ENCODE measurements at regions of chr15 and their contacts with region 1.

Region 1: DNA sequence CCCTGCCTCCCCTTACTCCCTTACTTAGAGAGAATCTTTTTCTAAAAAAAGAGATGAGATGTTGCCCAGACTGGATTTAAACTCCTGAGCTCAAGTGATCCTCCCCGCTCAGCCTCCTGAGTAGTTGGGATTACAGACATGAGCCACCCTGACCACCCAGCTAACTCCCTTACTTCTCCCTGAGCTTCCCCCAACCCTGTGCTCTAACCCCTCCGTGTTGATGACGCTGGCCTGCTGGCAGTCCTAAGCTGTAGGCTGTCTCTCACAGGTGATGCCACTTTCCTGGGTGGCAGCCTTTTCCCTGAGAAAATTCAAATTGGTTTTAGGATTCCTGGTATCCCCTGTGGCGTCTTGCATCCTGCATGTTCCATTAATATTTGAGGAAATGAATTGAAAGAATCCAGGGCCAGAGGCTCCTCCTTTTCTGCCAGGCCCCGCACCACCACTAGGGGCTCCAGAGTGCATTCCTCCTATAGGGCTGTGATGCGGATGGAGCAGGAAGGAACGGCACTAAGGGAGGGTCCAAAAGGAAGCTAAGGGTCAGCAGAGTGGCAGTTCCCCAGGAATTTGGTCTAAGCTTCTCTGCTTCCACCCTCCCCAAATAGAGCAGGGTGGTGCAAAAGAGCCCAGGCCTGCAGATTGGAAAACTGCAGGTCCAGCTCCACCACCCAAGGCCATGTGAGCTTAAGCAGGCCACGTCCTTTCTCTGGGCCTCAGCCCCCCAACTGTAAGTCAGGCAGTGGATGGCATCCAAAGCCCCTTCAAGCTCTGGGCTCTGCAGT is 101.1 kb downstream of the DAPK2 start:
- DNase-seq: peak; percentile 82
- ATAC-seq: peak; percentile 97
- H3K4me3 Mint-ChIP-seq: no peak overlapping the region
- H3K27ac Mint-ChIP-seq: no peak overlapping the region
- H3K4me1 Mint-ChIP-seq: peaks cover 2% of the 10 kb centered on the region
- H3K27me3 Mint-ChIP-seq: no peaks in the 10 kb centered on the region
- CTCF ChIP-seq: peak; percentile 87

Region 2: DNA sequence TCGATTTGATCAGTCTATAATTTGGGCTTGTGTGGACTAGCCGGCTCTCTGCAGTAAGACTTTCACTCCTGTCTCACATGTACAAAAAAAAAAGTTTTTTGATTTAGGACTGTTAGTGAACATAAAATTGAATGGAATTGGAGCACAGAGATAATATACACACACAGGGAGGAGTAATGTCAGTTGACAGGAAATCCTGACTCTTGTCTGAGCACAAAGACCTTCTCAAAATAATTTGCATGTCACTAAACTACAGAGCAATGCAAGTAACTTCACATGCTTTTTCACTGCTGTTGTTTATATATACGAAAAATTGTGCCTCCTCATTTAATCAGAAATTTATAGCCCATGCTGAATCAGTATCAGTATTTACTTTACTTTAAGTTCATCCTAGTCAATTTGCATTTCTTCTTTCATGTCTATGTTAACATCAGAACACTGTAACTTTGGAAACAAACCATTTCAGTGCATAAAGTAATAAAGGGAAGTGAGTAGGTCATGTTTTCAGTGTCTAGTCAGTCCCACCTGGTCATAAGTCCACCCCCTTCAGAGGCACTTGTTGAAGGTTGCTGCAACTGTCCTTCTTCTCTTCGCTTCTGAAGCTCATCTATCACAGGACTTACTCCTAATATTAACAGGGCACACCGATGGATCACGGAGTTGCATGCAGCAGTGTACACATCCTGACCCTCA is 232.2 kb before region 1 on chr15:
- CTCF ChIA-PET with region 1: no interaction called
- POLR2A ChIA-PET with region 1: no interaction called
- DNase-seq: no peak
- ATAC-seq: no peak
- H3K4me3 Mint-ChIP-seq: no peak overlapping the region
- H3K27ac Mint-ChIP-seq: peak overlapping the region; percentile 44
- H3K4me1 Mint-ChIP-seq: peaks cover 7% of the 10 kb centered on the region
- H3K27me3 Mint-ChIP-seq: no peaks in the 10 kb centered on the region
- CTCF ChIP-seq: no peak

Region 3: GRCh38 chr15:63818191-63818590 is 127.0 kb before region 1 on chr15:
- CTCF ChIA-PET with region 1: interaction called, 12 read pairs
- POLR2A ChIA-PET with region 1: no interaction called
- DNase-seq: no peak
- ATAC-seq: peak; percentile 31; the same call in 1 of the 2 replicates
- H3K4me3 Mint-ChIP-seq: no peak overlapping the region
- H3K27ac Mint-ChIP-seq: peak overlapping the region; percentile 89
- H3K4me1 Mint-ChIP-seq: peaks cover 43% of the 10 kb centered on the region
- H3K27me3 Mint-ChIP-seq: no peaks in the 10 kb centered on the region
- CTCF ChIP-seq: no peak

Region 4: GRCh38 chr15:63922261-63922904 is 22.8 kb before region 1 on chr15:
- CTCF ChIA-PET with region 1: interaction called, 19 read pairs
- POLR2A ChIA-PET with region 1: no interaction called
- DNase-seq: no peak
- ATAC-seq: no peak
- H3K4me3 Mint-ChIP-seq: no peak overlapping the region
- H3K27ac Mint-ChIP-seq: no peak overlapping the region
- H3K4me1 Mint-ChIP-seq: peaks cover 13% of the 10 kb centered on the region
- H3K27me3 Mint-ChIP-seq: no peaks in the 10 kb centered on the region
- CTCF ChIP-seq: no peak

Region 5: DNA sequence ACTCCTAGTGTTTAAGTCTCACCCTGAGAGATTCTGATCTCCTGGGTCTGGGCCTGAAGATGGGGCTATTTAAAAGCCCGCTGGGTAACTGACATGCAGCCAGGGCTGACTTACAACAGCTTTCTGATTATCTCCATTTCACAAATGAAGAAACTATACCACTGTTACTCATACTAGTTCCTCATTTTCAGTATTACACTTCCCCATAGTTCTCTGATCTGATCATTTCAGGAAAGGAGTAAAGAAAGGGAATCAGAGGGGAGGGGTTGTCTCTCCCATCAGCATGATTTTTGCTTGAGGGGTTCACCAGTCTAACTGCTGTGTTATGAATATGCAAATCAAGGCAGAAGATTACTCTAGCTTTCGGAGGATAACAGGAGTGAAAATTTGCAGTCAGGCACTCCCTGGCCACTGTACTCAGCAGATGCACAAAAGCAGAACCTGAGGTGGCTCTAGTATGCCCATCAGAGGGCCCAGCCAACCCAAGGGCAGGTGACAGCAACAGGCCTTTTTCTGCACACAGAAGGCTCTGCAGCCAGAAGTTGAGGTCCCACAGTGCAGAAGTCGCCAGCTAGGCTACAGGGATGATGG is 41.6 kb after region 1 on chr15:
- CTCF ChIA-PET with region 1: interaction called, 80 read pairs
- POLR2A ChIA-PET with region 1: no interaction called
- DNase-seq: no peak
- ATAC-seq: no peak
- H3K4me3 Mint-ChIP-seq: no peak overlapping the region
- H3K27ac Mint-ChIP-seq: no peak overlapping the region
- H3K4me1 Mint-ChIP-seq: 0 out of 2 replicates have a peak, but pooled peaks cover 2% of the 10 kb centered on the region
- H3K27me3 Mint-ChIP-seq: no peaks in the 10 kb centered on the region; the same call in 1 of the 2 replicates
- CTCF ChIP-seq: no peak

Region 6: DNA sequence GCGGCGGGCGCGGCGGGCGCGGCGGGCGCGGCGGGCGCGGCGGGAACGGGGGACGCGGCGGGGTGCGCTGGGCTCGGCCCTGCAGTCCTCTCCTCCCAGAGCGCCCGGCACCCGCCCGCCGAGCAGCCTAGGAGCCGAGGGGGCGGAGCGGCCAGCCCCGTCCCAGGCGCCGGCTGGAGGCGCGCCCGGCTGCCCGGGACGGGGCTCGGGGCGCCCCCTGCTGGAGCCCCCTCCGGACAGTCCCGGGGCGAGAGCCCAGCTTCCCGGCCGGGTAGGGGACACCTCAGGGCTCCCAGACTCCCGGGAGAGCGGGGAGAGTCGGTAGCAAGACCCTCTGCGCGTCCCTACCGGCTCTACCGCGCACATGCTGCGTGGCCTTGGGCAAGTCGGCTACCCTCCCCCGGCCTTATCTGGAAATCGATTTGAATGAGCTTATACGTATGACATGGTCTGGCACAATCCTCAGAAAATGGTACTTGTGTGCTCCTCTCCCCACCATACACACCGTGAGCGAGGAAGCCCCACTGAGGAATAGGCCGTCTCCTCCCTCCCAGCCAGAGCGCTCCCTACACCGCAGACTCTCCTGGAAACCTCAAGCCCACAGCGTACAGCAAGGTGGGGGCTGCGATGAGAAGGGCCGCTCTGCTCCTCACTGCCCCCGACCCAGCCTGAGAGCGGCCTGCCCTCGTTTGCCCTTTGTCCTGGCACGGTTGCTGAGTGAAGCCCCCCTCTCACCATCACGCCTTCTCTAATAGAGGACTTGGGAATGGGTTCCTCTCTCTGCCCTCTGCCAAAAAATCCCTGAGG is 101.4 kb after region 1 on chr15 and contains the start of gene DAPK2:
- CTCF ChIA-PET with region 1: interaction called, 57 read pairs
- POLR2A ChIA-PET with region 1: no interaction called
- DNase-seq: peak; percentile 73
- ATAC-seq: peak; percentile 88
- H3K4me3 Mint-ChIP-seq: peak within 1 kb of the TSS; percentile 74
- H3K27ac Mint-ChIP-seq: no peak within 1 kb of the TSS
- H3K4me1 Mint-ChIP-seq: peaks cover 7% of the 10 kb centered on the region
- H3K27me3 Mint-ChIP-seq: peaks cover 51% of the 10 kb centered on the region
- CTCF ChIP-seq: peak; percentile 60
- total RNA-seq, gene DAPK2: 1.0 to 2.3 TPM (median 1.5 TPM) in 3 replicates

Region 7: GRCh38 chr15:64082757-64083156 is 137.6 kb after region 1 on chr15:
- CTCF ChIA-PET with region 1: no interaction called
- POLR2A ChIA-PET with region 1: no interaction called
- DNase-seq: no peak
- ATAC-seq: no peak
- H3K4me3 Mint-ChIP-seq: no peak overlapping the region
- H3K27ac Mint-ChIP-seq: no peak overlapping the region
- H3K4me1 Mint-ChIP-seq: no peaks in the 10 kb centered on the region
- H3K27me3 Mint-ChIP-seq: no peaks in the 10 kb centered on the region
- CTCF ChIP-seq: no peak

Region 8: DNA sequence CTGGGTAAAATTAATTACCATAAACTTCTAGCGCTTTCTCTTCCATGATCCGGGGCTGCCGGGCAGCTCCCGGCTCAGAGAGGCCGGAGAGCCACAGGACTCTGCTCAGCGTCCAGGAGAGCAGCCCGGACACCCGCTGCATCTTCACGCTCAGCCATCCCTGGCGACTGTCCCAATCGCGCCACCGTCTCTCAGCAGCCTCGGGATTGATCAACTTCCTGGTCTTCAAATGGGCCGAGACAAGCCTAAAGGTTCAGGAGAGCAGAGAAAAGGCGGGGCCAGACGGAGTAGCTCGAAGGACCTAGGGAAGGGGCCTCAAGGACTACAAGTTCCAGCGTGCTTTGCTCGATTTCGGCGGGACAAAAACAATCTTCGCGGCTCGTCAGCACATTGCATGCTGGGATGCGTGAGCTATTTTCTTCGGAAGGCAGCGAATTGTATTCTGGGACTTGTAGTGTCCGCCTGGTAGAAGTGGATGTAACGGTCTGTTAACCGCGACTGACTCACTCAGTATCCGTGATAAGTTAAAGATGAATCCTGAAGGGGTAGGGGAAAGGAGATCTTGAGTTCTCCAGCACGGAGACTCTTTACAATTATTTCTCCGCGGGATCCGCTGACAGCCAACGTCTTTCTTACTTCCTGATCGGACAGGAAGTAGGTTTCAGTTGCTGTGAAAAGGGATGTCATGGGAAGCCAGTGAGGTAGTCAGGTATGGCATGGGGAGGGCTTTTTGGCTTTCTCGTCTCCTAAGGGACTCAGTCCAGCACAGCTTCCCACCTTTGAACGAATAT is 148.6 kb after region 1 on chr15 and contains the start of gene CIAO2A:
- CTCF ChIA-PET with region 1: interaction called, 17 read pairs
- POLR2A ChIA-PET with region 1: no interaction called
- DNase-seq: peak; percentile 95
- ATAC-seq: peak; percentile 86
- H3K4me3 Mint-ChIP-seq: peak within 1 kb of the TSS; percentile 99
- H3K27ac Mint-ChIP-seq: peak within 1 kb of the TSS; percentile 99
- H3K4me1 Mint-ChIP-seq: peaks cover 40% of the 10 kb centered on the region
- H3K27me3 Mint-ChIP-seq: no peaks in the 10 kb centered on the region
- CTCF ChIP-seq: no peak
- total RNA-seq, gene CIAO2A: 67.6 to 73.6 TPM (median 72.3 TPM) in 3 replicates

Measured in WTC11 (cell line).